Stomach (tissue), 19 donors: ENCODE measurements at regions of chr18 and their contacts with region 1.

Region 1: DNA sequence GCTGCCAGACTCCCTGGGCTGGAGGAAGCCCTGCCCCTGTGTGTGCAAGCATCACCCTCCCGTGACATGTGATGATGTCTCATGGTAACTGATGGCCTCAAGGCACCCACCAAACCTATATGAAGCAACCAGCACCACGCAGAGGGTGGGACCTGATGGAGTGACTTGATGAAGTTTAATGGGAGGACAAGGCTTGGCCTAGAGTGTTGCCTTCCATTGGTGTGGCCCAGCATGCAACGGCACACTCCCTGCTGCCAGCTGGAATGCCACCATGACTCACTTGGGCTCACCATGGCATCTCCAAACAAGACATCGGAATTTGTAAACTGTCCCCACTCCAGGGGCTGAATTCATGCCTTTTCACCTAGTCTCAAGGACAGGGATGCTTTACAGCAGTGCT is 8.6 kb upstream of the SLC14A1 start:
- DNase-seq: no peak
- H3K4me3 ChIP-seq: no peak overlapping the region
- H3K27ac ChIP-seq: no peak overlapping the region
- H3K4me1 ChIP-seq: no peaks in the 10 kb centered on the region
- H3K27me3 ChIP-seq: no peaks in the 10 kb centered on the region
- CTCF ChIP-seq: no peak
- EP300 ChIP-seq: no peak
- POLR2A ChIP-seq: no peak

Region 2: GRCh38 chr18:45839414-45840395 is 124.4 kb after region 1 on chr18:
- intact Hi-C with region 1: loop called (anchors 10 kb)
- DNase-seq: peak; percentile 67 to 87
- H3K4me3 ChIP-seq: no peak overlapping the region
- H3K27ac ChIP-seq: no peak overlapping the region
- H3K4me1 ChIP-seq: peaks cover 26 to 46% (median 39%) of the 10 kb centered on the region in 4 donors
- H3K27me3 ChIP-seq: peaks cover 0 to 40% (median 16%) of the 10 kb centered on the region in 3 donors
- CTCF ChIP-seq: peak in 5 of 7 experiments; percentile 36 to 55 (median 46)
- EP300 ChIP-seq: no peak
- POLR2A ChIP-seq: no peak